ENCODE measurements at regions of chr1 and their contacts with region 1.

Region 1: GRCh38 chr1:157992031-157992832 is 1.2 kb upstream of the KIRREL1 start:
- DNase-seq: no peak
- H3K4me3 ChIP-seq: no peak overlapping the region
- H3K27me3 ChIP-seq: 0 out of 2 replicates have a peak, but pooled peaks cover 1% of the 10 kb centered on the region
- CTCF ChIP-seq: peak; percentile 99

Region 2: GRCh38 chr1:157955857-157956256 is 36.4 kb before region 1 on chr1:
- CTCF ChIA-PET with region 1: no interaction called
- POLR2A ChIA-PET with region 1: no interaction called
- DNase-seq: no peak
- H3K4me3 ChIP-seq: no peak overlapping the region
- H3K27me3 ChIP-seq: peaks cover 18% of the 10 kb centered on the region
- CTCF ChIP-seq: no peak

Region 3: DNA sequence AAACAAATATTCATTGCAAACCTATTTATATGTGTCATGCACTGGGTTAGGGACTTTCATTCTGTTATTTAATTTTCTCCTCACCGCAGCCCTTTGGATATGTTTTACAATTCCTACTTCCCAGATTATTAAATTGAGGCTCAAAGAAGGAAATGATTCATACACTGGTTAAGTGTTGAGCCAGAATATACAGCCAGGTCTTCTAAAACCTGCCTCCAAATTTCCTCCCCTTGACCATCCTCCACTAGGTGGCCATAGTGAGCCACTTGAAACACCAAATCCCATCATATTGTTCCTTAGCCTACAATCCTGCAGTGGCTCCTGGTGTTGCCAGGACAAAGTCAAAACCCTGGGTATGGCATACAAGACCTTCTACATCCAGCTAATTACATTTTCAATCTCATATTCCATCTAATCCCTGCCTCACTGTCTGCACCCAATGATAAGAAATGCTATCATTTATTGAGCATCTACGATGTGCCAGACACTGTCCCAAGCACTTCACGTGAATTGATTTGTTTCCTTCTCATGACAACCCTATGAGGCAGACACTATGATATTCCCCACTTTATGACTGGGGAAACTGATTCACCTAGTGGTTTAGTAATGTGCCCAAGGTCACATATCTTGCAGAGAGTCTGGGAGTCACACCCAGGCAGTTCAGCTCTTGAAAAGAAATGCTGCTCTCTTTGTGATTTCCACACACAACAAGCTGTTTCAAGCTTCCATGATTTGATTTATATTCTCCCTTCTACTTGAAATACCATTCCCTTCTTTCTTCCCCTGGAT is 22.3 kb before region 1 on chr1:
- CTCF ChIA-PET with region 1: interaction called, 96 read pairs
- POLR2A ChIA-PET with region 1: no interaction called
- DNase-seq: peak; percentile 55
- H3K4me3 ChIP-seq: no peak overlapping the region
- H3K27me3 ChIP-seq: no peaks in the 10 kb centered on the region
- CTCF ChIP-seq: peak; percentile 93

Region 4: GRCh38 chr1:158035976-158036583 is 43.8 kb after region 1 on chr1:
- CTCF ChIA-PET with region 1: interaction called, 272 read pairs
- POLR2A ChIA-PET with region 1: no interaction called
- DNase-seq: no peak
- H3K4me3 ChIP-seq: no peak overlapping the region
- H3K27me3 ChIP-seq: no peaks in the 10 kb centered on the region
- CTCF ChIP-seq: peak; percentile 64

Region 5: DNA sequence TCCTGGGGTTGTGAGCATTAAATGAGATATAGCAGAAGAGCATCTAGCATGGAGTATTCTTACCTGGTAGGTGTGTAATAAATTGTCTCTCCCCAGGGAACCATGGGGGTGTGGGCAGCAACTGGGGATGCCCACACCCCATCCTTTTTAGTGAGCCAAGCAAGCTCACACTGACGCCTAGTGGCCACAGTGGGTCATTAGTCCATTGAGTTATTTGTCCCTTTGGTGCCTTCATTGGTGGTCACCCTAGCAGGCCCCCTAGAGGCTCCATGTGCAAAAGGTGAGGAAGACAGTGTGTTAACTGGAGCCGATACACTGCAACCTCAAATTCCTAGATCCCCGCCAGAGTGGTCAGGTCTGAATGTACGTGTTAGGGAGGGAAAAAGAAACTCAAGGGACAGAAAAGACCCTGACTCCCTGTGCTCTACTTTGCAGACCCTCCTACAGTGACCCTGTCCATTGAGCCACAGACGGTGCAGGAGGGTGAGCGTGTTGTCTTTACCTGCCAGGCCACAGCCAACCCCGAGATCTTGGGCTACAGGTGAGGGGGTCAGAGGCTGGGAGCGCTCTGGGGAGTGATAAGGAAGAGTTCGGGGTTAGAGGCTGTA is 95.2 kb after region 1 on chr1:
- CTCF ChIA-PET with region 1: interaction called, 102 read pairs
- POLR2A ChIA-PET with region 1: no interaction called
- DNase-seq: no peak
- H3K4me3 ChIP-seq: no peak overlapping the region
- H3K27me3 ChIP-seq: no peaks in the 10 kb centered on the region
- CTCF ChIP-seq: peak; percentile 91

Region 6: GRCh38 chr1:158107916-158108315 is 115.7 kb after region 1 on chr1:
- CTCF ChIA-PET with region 1: interaction called, 187 read pairs
- POLR2A ChIA-PET with region 1: no interaction called
- DNase-seq: no peak
- H3K4me3 ChIP-seq: no peak overlapping the region
- H3K27me3 ChIP-seq: peaks cover under 1% of the 10 kb centered on the region; the same call in 1 of the 2 replicates
- CTCF ChIP-seq: no peak